Body of pancreas (tissue), 4 donors: ENCODE measurements at regions of chr1 and their contacts with region 1.

Region 1: DNA sequence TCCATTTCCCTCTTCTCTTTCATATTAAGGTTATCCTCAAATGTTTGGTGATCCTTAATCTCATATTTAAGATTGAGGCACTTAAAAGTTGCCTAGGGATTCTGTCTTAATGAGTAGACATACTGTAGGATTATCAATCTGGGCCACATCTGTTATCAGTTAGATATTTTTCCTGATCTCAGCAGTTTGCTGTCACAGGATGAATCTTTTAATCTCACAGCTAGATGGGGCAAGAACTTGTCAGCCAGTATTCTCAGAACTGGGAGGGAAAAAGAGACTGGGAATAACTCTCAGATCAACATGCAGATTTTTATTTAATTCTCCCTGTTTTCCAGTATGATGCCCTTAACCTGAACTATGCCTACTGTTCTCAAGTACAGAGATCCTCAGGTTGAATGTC is 14.0 kb downstream of the ZNF644 start:
- DNase-seq: no peak
- ATAC-seq: no peak
- H3K4me3 ChIP-seq: no peak overlapping the region
- H3K27ac ChIP-seq: no peak overlapping the region
- H3K4me1 ChIP-seq: peaks cover 9% of the 10 kb centered on the region
- H3K27me3 ChIP-seq: no peaks in the 10 kb centered on the region
- CTCF ChIP-seq: no peak
- POLR2A ChIP-seq: no peak

Region 2: DNA sequence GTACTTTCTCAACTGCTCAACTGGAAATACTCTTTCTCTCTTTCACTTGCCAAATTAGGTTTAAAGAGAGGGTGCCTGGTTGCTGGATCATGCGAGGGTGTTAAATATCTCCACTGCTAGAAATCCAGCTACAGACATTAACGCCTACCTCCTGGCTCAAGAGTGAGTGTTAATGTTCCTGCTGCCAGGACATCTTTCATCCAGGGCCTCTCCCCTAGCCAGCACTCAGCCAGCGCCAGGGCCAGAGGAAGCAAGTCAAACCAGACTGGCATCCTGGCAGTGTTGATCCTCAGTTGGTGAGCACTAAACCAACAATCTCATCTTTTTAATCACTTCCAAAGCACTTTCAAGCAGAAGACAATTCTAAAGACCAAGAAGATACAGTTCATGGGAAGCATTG is 197.8 kb before region 1 on chr1:
- intact Hi-C with region 1: no loop called
- DNase-seq: no peak
- ATAC-seq: no peak
- H3K4me3 ChIP-seq: no peak overlapping the region
- H3K27ac ChIP-seq: no peak overlapping the region
- H3K4me1 ChIP-seq: no peaks in the 10 kb centered on the region
- H3K27me3 ChIP-seq: no peaks in the 10 kb centered on the region
- CTCF ChIP-seq: no peak
- POLR2A ChIP-seq: no peak

Region 3: GRCh38 chr1:91065337-91065736 is 57.5 kb after region 1 on chr1:
- intact Hi-C with region 1: loop called (anchors 10 kb)
- DNase-seq: peak; percentile 12 to 57 (median 42)
- ATAC-seq: peak; percentile 27
- H3K4me3 ChIP-seq: no peak overlapping the region
- H3K27ac ChIP-seq: no peak overlapping the region
- H3K4me1 ChIP-seq: peaks cover 9% of the 10 kb centered on the region
- H3K27me3 ChIP-seq: no peaks in the 10 kb centered on the region
- CTCF ChIP-seq: peak in 2 of 7 experiments; percentile 15 to 32
- POLR2A ChIP-seq: no peak